GM10248 (cell line): ENCODE measurements at regions of chr12 and their contacts with region 1.

Region 1: DNA sequence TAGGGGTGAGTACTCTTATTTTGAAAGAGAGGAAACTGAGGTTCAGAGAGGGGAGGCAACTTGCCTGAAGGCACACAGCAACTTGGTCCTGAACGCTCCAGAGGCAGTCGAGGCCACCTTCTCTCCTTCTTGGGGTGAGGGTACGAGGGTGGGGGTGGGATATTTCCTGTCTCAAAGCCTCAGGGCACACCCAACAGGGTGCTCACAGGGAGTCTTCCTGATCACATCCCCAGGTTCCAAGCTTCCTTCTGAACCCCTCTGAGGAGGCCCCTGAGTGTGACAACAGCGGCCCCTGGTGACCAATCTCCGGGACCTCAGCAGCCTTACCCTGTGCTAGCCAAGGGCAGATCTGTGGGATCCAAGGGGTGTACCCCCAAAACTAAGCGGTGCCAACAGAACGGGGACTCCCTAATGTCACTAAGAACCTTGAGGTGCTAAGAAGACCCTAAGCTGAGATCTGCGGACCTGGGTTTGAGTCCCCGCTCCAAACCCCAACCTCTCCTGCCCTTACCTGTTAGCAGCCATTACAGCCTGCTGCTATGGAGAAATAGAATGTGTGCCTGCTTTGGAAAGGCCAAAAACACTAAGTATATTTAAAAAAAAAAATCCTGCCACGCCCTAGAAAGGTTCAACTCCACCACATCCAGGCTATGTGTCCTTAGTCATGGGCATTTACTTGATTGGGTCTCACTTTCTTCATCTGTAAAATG is 57.9 kb downstream of the TRPV4 start:
- DNase-seq: peak; percentile 75
- CTCF ChIP-seq: peak; percentile 86

Region 2: DNA sequence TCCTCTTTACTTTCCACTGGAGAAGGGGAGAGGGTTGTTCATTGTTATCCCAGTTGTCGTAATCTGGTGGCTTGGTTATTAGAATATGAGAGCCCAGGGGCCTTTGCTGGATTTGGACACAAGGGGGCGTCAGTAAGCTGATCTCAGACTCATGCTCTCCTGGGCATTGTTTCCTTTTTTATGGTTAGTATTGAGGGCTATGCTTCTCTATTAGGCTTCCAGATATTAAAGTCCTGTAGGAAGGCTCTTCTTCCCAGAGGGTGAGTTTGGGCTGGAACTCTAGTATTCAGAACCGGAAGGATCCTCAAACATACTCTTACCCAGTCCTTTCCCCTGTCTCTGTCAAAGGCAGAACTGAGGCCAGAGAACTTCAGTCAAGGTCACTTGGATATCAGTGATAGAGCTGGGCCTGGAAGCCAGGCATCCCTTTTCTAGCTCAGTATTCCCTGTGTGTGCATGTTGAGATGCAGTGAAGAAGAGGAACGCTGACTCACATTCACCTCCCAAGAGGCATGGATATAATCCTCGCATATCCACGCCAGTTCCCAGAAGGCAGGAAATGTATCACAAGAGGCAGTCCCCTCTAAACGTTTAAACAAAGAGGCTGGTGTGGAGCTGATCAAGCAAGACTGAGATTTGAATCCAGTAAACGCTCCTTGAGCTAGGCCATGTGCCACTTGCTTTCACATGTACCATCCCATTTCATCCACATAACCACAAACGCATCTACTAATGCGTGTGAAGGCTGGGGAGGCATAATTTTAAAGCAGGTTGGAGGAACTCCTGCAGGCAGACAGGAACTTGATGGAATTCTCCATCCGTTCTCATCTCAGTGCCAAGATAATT is 256.3 kb before region 1 on chr12:
- CTCF ChIA-PET with region 1: interaction called, 30 read pairs
- POLR2A ChIA-PET with region 1: no interaction called
- DNase-seq: peak; percentile 64
- CTCF ChIP-seq: peak; percentile 64